Upper lobe of right lung (tissue), 1 donor: ENCODE measurements at regions of chr16 and their contacts with region 1.

Region 1: GRCh38 chr16:72832621-72833248 is 215.2 kb downstream of the ZFHX3 start:
- DNase-seq: peak; percentile 87
- ATAC-seq: peak; percentile 97
- H3K4me3 ChIP-seq: no peak overlapping the region
- H3K27ac ChIP-seq: no peak overlapping the region
- H3K4me1 ChIP-seq: no peaks in the 10 kb centered on the region
- H3K27me3 ChIP-seq: no peaks in the 10 kb centered on the region
- CTCF ChIP-seq: peak; percentile 96

Region 2: DNA sequence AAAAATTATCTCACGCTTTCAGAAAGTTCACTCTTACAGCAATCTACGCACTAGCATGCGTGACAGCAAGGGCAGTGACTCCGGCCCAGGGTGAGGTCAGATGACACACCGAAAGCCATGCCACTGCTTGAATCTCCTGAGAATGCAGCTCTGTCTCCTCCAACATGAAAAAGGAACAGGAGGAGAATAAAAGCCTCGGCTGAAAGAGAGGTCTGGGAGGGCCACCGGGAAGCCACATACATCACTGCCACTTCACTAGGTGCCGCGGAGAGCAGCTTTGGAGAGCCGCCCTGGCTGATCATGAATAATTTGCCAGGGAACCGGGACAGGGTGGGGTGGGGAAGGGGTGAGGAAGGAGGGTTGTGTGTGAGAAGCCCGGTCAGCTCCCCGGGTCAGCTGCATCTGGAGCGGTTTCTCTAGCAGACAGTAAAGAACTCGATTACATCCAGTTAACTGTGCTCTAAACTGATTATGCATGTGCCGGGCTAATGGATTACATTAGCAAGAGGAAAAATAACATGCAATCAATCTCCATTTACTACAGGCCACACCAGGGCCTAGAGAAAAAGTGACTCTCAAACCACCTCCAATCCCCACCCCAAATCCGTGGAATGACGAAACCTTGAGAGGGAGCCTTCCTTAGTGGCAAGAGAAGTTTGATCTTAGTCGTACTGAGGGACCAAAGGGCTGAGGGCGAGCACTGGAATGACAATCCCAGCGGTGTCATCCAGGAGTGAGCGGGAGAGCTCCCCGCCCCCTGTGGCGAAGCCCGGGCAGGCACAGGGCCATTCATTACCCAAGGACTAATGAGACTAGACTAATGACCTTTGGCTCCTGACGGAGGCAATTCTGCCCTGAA is 114.9 kb after region 1 on chr16:
- intact Hi-C with region 1: loop called (anchors 10 kb)
- DNase-seq: no peak
- ATAC-seq: peak; percentile 41
- H3K4me3 ChIP-seq: no peak overlapping the region
- H3K27ac ChIP-seq: peak overlapping the region; percentile 17
- H3K4me1 ChIP-seq: peaks cover 15% of the 10 kb centered on the region
- H3K27me3 ChIP-seq: no peaks in the 10 kb centered on the region
- CTCF ChIP-seq: no peak

Region 3: GRCh38 chr16:73196670-73197069 is 363.9 kb after region 1 on chr16:
- intact Hi-C with region 1: loop called (anchors 10 kb)
- DNase-seq: peak; percentile 71
- ATAC-seq: peak; percentile 99
- H3K4me3 ChIP-seq: no peak overlapping the region
- H3K27ac ChIP-seq: no peak overlapping the region
- H3K4me1 ChIP-seq: no peaks in the 10 kb centered on the region
- H3K27me3 ChIP-seq: no peaks in the 10 kb centered on the region
- CTCF ChIP-seq: peak; percentile 75